Activated CD4-positive, alpha-beta T cell treated with anti-CD3 and anti-CD28 coated beads, Interleukin-2, amount 10 ng/mL, durations not matched to agents 7 days and 5 days (primary cell): ENCODE measurements at regions of chr4 and their contacts with region 1.

Region 1: GRCh38 chr4:38902695-38903094 is 35.1 kb downstream of the FAM114A1 start:
- DNase-seq: no peak
- H3K4me3 Mint-ChIP-seq: no peak overlapping the region
- H3K27ac Mint-ChIP-seq: no peak overlapping the region
- H3K4me1 Mint-ChIP-seq: no peaks in the 10 kb centered on the region
- H3K27me3 Mint-ChIP-seq: peaks cover 5% of the 10 kb centered on the region

Region 2: GRCh38 chr4:38855466-38855865 is 47.2 kb before region 1 on chr4:
- CTCF ChIA-PET with region 1: no interaction called
- POLR2A ChIA-PET with region 1: no interaction called
- DNase-seq: no peak
- H3K4me3 Mint-ChIP-seq: peak overlapping the region; percentile 72
- H3K27ac Mint-ChIP-seq: peak overlapping the region; percentile 94
- H3K4me1 Mint-ChIP-seq: peaks cover 36% of the 10 kb centered on the region
- H3K27me3 Mint-ChIP-seq: no peaks in the 10 kb centered on the region

Region 3: DNA sequence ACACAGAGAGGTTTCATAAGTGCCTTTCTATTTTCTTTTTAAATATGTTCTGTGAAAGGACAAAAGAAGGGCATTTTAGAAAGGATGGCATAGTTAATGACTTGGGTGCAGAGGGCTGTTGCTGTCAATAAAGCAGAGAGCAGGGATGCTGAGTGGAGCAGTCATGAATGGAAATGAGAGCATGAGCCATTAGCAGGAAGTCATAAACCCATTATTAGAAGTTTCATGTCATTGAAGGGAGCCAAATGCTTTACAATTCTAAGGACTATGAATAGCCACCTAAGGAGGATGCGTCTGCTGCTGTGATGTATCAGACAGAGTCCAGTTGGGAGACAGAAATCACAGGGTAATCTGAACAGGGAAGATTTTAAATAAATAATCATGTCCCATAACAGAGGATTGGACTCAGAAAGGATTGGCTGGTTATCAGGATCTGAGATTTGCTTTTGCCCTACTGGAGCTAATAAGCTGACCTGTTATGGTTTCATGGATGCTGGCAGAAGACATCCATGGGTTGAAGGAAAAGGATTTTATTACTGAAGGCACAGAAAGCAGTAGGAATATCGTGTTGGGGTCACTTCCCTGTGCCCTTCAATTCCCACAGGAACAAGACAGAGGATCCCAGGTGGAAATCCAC is 232.1 kb after region 1 on chr4:
- CTCF ChIA-PET with region 1: interaction called, 29 read pairs
- POLR2A ChIA-PET with region 1: no interaction called
- DNase-seq: no peak
- H3K4me3 Mint-ChIP-seq: no peak overlapping the region
- H3K27ac Mint-ChIP-seq: no peak overlapping the region
- H3K4me1 Mint-ChIP-seq: peaks cover 11% of the 10 kb centered on the region
- H3K27me3 Mint-ChIP-seq: no peaks in the 10 kb centered on the region